HCT116 (cell line): ENCODE measurements at regions of chr11 and their contacts with region 1.

Region 1: GRCh38 chr11:2151500-2152257 is 9.3 kb downstream of the INS start:
- DNase-seq: peak; percentile 75
- ATAC-seq: peak; percentile 66
- H3K4me3 ChIP-seq: peak overlapping the region; percentile 12 to 20; a peak in 3 of 4 replicates
- H3K27ac ChIP-seq: no peak overlapping the region; the same call in 1 of the 2 replicates
- H3K4me1 ChIP-seq: peaks cover 0 to 4% of the 10 kb centered on the region in 2 experiments; a peak in 1 of 4 replicates
- H3K27me3 ChIP-seq: no peaks in the 10 kb centered on the region; the same call in 1 of the 2 replicates
- CTCF ChIP-seq: peak; percentile 73 to 86 (median 81)
- POLR2A ChIP-seq: no peak
- RAD21 ChIP-seq: peak; percentile 87

Region 2: DNA sequence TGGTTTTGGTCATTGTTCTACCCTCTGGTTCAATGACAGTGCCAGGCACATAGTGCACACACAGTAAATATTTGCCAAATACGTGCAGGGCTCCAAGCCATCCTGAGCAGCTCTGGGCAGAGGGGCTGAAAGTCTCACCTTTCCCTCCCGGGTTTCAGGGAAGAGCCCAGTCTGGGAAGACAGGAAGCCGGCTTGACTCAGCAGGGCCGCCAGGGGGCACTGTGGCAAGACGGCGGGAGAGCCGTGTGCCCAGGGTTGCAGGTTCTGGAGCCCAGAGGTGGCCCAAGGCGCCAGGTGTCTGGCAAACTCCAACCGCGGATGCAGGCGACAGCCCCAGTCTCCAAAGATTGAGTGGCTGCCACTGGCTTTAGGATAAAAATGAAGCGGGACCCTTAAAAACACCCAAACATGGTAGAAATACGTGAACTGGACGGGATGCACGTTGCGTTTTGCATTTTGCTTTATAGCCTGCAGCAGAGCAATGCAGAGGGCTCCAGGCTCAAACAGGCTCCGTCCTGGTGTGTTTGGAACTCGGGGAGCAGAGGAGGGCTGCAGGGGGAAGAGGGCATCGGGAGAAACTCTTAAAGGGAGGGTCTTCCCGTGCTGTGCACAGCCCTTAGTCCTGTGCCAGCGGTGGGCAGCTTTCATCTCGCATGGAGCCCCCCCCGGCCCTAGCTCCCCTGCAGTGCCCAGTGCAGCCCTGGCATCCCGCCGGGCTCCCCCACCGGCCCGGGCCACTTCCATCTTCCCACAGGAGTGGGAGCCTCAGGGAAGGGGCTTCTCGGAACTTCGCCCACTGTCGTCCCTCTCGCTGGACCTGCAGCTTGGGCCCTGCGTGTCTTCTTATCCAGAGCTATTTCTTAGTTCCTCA is 511.4 kb before region 1 on chr11:
- CTCF ChIA-PET with region 1: interaction called, 10 read pairs
- POLR2A ChIA-PET with region 1: no interaction called
- RAD21 ChIA-PET with region 1: interaction called in 1 of 2 experiments, 3 read pairs
- intact Hi-C with region 1: no loop called
- DNase-seq: no peak
- ATAC-seq: peak; percentile 94
- H3K4me3 ChIP-seq: no peak overlapping the region
- H3K27ac ChIP-seq: no peak overlapping the region
- H3K4me1 ChIP-seq: peaks cover 0 to 9% of the 10 kb centered on the region in 2 experiments; a peak in 1 of 4 replicates
- H3K27me3 ChIP-seq: no peaks in the 10 kb centered on the region
- CTCF ChIP-seq: peak; percentile 63 to 94 (median 90)
- POLR2A ChIP-seq: no peak
- RAD21 ChIP-seq: peak; percentile 46

Region 3: DNA sequence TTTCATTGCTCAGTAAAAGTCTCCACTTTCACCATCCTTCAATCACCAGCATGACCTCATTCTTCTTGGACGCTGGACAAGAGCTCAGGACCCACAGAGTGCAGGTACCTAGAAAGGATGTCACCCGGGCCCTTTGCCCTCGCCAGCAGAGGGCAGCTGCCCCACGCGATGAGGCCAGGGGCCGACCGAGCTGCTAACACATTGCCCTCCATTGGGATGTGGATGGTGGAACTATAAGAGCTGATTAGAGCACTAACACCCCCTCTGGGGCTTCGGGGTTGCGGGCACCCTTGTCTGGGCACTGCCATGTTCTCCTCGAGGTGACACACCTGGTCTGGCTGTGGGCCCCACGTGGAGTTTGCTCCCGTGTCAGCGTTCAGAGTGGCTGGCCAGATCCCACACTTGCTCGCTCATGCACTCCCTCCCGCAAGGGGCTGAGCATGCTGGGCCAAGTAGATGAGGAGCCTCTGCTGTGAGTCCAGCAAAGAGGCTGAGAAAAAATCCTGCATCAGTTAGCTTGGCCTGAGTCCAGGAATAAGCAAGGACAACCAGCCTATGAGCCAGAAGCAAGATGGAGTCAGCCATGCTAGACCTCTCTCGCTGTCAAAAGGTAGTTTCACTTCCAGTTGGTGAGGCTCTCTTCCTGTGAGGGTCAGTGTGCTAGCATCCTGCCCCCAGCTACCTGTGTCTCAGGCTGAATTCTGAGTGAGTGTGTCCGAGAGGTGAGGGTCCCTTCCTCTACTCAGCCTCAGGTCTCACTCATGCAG is 444.9 kb before region 1 on chr11:
- CTCF ChIA-PET with region 1: interaction called, 8 read pairs
- POLR2A ChIA-PET with region 1: no interaction called
- RAD21 ChIA-PET with region 1: no interaction called
- intact Hi-C with region 1: loop called (anchors 5 kb)
- DNase-seq: no peak
- ATAC-seq: peak; percentile 55; the same call in 1 of the 2 replicates
- H3K4me3 ChIP-seq: no peak overlapping the region
- H3K27ac ChIP-seq: no peak overlapping the region
- H3K4me1 ChIP-seq: no peaks in the 10 kb centered on the region
- H3K27me3 ChIP-seq: no peaks in the 10 kb centered on the region
- CTCF ChIP-seq: peak; percentile 28 to 38 (median 34); a peak in 3 of 6 replicates
- POLR2A ChIP-seq: no peak
- RAD21 ChIP-seq: peak; percentile 61

Region 4: DNA sequence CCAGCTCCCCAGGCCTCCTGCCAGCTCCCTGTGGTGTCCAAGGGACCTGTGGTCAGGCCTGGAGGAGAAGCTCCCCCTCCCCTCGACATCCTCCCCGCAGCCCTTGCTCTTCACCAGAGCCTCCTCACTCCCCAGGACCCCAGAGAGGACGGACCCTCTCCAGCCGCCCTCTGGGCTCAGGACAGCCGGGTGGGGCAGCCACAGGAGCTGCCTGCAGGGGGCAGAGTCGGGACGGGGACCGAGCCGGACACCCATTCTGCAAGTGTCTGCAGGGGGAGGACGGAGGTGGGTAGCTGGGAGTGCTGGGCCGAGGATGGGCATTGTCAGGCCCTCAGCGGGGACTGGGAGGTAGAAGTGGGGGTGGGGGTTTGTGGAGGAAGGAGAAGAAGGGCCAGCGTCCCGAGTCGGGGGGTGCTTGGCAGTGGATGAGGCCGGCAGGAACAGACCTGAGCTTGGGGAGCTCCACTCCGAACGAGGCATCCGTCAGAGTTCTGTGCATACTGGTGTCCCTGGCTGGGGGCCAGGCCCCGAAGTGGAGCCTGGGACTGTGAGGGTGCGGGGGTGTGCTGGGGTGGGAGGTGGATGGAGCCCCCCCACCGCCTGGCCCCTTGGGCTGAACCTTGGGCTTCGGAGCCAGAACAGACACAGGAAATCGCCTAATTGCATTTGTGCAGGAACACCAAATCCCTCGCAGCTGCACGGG is 275.2 kb before region 1 on chr11:
- CTCF ChIA-PET with region 1: interaction called, 60 read pairs
- POLR2A ChIA-PET with region 1: no interaction called
- RAD21 ChIA-PET with region 1: interaction called, 3 to 15 read pairs
- intact Hi-C with region 1: no loop called
- DNase-seq: no peak
- ATAC-seq: peak; percentile 94
- H3K4me3 ChIP-seq: no peak overlapping the region
- H3K27ac ChIP-seq: no peak overlapping the region; the same call in 1 of the 2 replicates
- H3K4me1 ChIP-seq: peaks cover 0 to 4% of the 10 kb centered on the region in 2 experiments; a peak in 1 of 4 replicates
- H3K27me3 ChIP-seq: no peaks in the 10 kb centered on the region
- CTCF ChIP-seq: peak; percentile 67 to 95 (median 79); a peak in 5 of 6 replicates
- POLR2A ChIP-seq: no peak
- RAD21 ChIP-seq: no peak; the same call in 1 of the 2 replicates

Region 5: DNA sequence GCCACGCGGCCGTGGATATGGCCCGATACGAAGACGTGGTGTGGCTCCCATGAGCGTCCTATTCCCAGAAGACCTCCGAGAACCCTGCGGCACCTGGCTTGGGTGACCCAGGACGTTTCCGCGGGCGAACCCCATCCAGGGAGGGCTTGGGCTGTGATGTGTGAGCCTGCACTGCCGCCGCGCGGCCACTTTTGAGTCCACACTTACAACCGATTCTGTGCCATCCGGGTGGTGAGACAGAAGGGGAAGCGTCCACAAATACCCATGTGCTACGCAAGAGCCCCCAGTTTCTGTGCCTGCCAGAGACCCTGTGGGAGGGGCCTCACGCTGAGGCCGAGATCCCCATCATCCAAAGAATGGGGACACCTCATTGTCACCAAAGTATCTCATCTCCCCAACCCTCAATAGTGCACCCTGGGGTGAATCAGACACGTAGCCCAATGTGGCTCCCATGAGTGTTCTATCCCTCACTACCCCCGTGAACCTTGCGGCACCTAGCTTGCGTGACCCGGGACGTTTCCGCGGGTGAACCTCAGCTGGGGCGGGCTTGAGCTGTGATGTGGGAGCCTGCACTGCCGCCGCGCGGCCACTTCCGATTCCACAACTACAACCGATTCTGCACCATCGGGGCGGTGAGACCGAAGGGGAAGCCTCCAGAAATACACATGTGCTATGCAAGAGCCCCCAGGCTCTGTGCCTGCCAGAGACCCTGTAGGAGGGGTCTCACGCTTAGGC is 149.5 kb before region 1 on chr11:
- CTCF ChIA-PET with region 1: interaction called, 26 read pairs
- POLR2A ChIA-PET with region 1: interaction called, 4 read pairs
- RAD21 ChIA-PET with region 1: interaction called in 1 of 2 experiments, 3 read pairs
- intact Hi-C with region 1: no loop called
- DNase-seq: no peak
- ATAC-seq: no peak
- H3K4me3 ChIP-seq: no peak overlapping the region
- H3K27ac ChIP-seq: no peak overlapping the region
- H3K4me1 ChIP-seq: no peaks in the 10 kb centered on the region
- H3K27me3 ChIP-seq: no peaks in the 10 kb centered on the region
- CTCF ChIP-seq: no peak
- POLR2A ChIP-seq: no peak
- RAD21 ChIP-seq: no peak

Region 6: GRCh38 chr11:2089536-2090165 is 62.0 kb before region 1 on chr11:
- CTCF ChIA-PET with region 1: interaction called, 10 read pairs
- POLR2A ChIA-PET with region 1: no interaction called
- RAD21 ChIA-PET with region 1: interaction called in 1 of 2 experiments, 3 read pairs
- intact Hi-C with region 1: no loop called
- DNase-seq: peak; percentile 73
- ATAC-seq: peak; percentile 100
- H3K4me3 ChIP-seq: no peak overlapping the region
- H3K27ac ChIP-seq: no peak overlapping the region
- H3K4me1 ChIP-seq: peaks cover 4 to 19% of the 10 kb centered on the region in 2 experiments; a peak in 2 of 4 replicates
- H3K27me3 ChIP-seq: no peaks in the 10 kb centered on the region
- CTCF ChIP-seq: no peak
- POLR2A ChIP-seq: no peak
- RAD21 ChIP-seq: no peak